Caco-2 (cell line): ENCODE measurements at regions of chr18 and their contacts with region 1.

Region 1: DNA sequence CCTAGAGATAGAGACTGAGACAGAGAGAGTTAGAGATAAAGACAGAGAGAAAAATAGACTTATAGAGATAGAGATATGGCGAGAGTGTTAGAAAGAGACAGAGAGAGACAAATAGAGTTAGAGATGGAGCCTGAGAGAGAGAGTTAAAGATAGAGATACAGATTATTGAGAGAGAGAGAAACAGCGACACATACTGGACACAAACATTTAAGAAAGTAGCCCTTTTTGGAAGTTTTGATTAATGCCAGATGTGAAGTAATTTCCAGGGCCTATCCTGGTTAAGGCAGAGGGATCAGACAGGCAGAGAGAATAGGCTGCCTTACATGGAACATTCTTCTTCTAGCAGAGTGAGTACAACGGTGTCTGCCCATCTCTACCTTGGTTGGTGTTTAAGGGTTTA is 311.6 kb upstream of the CDH7 start:
- DNase-seq: no peak
- H3K4me3 ChIP-seq: no peak overlapping the region
- H3K4me3 Mint-ChIP-seq: no peak overlapping the region
- H3K27ac Mint-ChIP-seq: no peak overlapping the region
- H3K4me1 ChIP-seq: no peaks in the 10 kb centered on the region
- H3K4me1 Mint-ChIP-seq: no peaks in the 10 kb centered on the region
- H3K27me3 ChIP-seq: no peaks in the 10 kb centered on the region
- H3K27me3 Mint-ChIP-seq: peaks cover 2% of the 10 kb centered on the region
- CTCF ChIP-seq: no peak

Region 2: DNA sequence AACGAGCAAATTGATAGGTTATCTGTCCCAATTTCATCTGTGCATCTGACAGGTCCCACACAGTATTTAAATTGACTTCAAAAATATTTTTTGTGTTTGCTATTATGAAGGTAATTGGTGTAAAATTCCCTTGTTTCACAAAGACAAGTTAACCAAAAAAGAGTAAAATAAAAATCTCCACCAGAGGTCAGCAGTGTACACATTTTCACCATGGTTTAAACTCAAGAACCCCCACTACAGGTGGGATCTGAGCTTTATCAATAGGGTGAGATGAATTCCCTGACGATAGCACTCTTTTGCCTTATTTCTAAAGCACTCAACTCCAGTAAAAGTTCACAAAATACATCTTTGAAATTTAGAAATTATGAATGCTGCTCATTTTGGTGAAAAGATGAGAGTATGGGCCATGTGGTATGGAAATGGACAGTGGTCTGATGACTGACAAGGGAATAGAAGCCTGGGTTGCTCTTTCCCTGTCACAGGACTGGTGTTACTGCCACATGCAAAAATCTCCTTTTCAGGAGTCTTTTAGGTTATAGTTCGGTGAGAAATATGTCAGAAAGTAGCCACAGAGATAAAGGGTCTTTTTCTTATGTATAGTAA is 1401.3 kb before region 1 on chr18:
- CTCF ChIA-PET with region 1: no interaction called
- POLR2A ChIA-PET with region 1: no interaction called
- intact Hi-C with region 1: loop called (anchors 5 kb)
- DNase-seq: peak in 1 of 2 experiments; percentile 17
- H3K4me3 ChIP-seq: no peak overlapping the region
- H3K4me3 Mint-ChIP-seq: no peak overlapping the region
- H3K27ac Mint-ChIP-seq: no peak overlapping the region
- H3K4me1 ChIP-seq: no peaks in the 10 kb centered on the region
- H3K4me1 Mint-ChIP-seq: no peaks in the 10 kb centered on the region
- H3K27me3 ChIP-seq: no peaks in the 10 kb centered on the region
- H3K27me3 Mint-ChIP-seq: no peaks in the 10 kb centered on the region
- CTCF ChIP-seq: peak; percentile 30 to 32